Kidney (tissue), 22 donors: ENCODE measurements at regions of chr11 and their contacts with region 1.

Region 1: GRCh38 chr11:128164080-128164741 is 423.1 kb downstream of the ETS1 start:
- DNase-seq: peak in 3 of 5 donors; percentile 41 to 48 (median 44)
- H3K4me3 ChIP-seq: no peak overlapping the region
- H3K27ac ChIP-seq: no peak overlapping the region
- H3K4me1 ChIP-seq: peaks cover 0 to 4% (median 0%) of the 10 kb centered on the region in 3 donors
- H3K27me3 ChIP-seq: no peaks in the 10 kb centered on the region
- CTCF ChIP-seq: no peak

Region 2: GRCh38 chr11:128210148-128210940 is 46.1 kb after region 1 on chr11:
- intact Hi-C with region 1: no loop called
- DNase-seq: peak in 4 of 5 donors; percentile 54 to 94 (median 82)
- H3K4me3 ChIP-seq: peak overlapping the region in 1 of 3 donors; percentile 11
- H3K27ac ChIP-seq: peak overlapping the region in 1 of 2 donors; percentile 13
- H3K4me1 ChIP-seq: peaks cover 0 to 10% (median 3%) of the 10 kb centered on the region in 3 donors
- H3K27me3 ChIP-seq: no peaks in the 10 kb centered on the region
- CTCF ChIP-seq: no peak

Region 3: DNA sequence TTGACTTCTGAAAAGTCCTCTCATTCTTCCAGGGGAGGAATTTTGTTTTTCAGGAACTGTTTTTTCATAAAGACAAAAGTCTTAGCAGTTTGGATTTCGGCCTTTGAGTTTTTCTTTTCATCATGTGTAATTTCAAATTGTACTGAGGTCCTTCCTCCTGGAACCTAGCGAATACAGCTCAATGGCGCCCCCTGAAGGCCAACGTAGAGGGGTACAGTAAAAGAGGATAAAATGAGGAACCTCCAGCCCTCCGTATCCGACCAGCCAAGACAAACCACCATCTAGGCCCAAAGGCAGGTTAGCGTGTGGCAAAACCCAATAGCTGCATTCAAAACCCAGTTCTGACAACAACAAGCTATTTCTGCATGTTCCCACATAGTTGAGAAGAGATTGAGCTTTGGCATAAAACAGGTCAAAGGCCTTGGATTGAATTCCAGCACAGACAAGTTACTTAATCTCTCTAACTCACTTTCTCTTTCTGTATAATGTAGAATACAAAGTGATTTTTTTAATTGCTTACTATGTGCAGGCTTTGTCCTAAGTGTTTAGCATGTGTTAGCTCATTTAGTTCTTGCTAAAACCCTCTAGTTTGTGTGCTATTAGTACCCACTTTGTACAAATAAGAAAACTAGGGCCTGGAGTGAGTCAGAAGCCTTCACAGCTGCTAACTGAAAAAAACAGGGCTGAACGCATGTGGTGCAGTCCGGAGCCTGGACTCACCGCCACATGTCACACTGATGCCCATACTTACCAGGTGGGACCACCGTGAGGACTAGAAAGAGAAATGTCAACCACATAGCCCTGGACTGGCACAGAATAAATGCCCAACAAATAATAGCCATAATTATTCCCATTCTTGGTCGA is 466.4 kb after region 1 on chr11:
- intact Hi-C with region 1: loop called (anchors 10 kb)
- DNase-seq: peak; percentile 87 to 95 (median 90)
- H3K4me3 ChIP-seq: no peak overlapping the region
- H3K27ac ChIP-seq: peak overlapping the region in 1 of 2 donors; percentile 30
- H3K4me1 ChIP-seq: peaks cover 2 to 10% (median 10%) of the 10 kb centered on the region in 3 donors
- H3K27me3 ChIP-seq: no peaks in the 10 kb centered on the region
- CTCF ChIP-seq: peak; percentile 92